ENCODE measurements at regions of chr2 and their contacts with region 1.

Region 1: DNA sequence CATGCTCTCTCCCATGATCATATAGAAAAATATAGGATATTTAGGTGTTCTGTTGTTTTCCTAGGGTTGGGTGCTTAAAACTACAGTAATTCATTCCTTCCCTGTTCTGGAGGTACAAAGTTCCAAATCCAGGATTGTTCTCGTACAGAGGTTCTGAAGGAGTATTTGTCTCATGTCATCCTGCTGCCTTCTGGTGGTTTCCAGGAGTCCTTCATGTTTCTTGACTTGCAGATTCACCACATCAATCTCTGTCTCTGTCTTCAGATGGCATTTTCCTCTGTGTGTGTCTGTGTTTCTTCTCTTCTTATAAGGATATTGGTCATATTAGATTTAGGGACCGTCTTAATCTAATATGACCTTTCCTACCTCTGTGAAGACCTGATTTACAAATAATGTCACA is 397.9 kb downstream of the NYAP2 start:
- DNase-seq: no peak
- ATAC-seq: no peak
- H3K4me3 ChIP-seq: no peak overlapping the region
- H3K27ac ChIP-seq: no peak overlapping the region
- H3K4me1 ChIP-seq: no peaks in the 10 kb centered on the region
- H3K27me3 ChIP-seq: no peaks in the 10 kb centered on the region

Region 2: DNA sequence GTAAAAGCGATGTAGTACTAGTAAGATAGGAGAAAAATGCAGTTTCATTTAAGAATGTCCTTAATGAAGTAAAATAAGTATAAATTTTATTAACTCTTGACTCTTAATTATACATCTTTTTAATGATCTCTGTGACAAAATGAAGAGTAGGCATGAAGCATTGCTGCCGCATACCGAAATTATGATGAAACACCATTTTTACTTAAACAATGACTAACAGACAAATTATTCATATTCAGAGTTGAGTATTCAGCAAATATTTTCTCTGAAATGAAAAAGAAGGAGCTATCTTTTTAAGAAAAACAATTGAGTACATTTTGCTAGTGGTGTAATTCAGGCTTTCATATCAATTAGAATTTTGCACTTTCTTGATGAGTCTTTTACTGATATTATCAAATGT is 604.5 kb before region 1 on chr2:
- intact Hi-C with region 1: no loop called
- DNase-seq: no peak
- ATAC-seq: no peak
- H3K4me3 ChIP-seq: no peak overlapping the region
- H3K27ac ChIP-seq: no peak overlapping the region
- H3K4me1 ChIP-seq: no peaks in the 10 kb centered on the region
- H3K27me3 ChIP-seq: no peaks in the 10 kb centered on the region

Region 3: GRCh38 chr2:225464346-225465025 is 332.9 kb before region 1 on chr2:
- intact Hi-C with region 1: no loop called
- DNase-seq: no peak
- ATAC-seq: no peak
- H3K4me3 ChIP-seq: peak overlapping the region; percentile 7
- H3K27ac ChIP-seq: no peak overlapping the region
- H3K4me1 ChIP-seq: no peaks in the 10 kb centered on the region
- H3K27me3 ChIP-seq: no peaks in the 10 kb centered on the region

Region 4: GRCh38 chr2:225668606-225669266 is 128.7 kb before region 1 on chr2:
- intact Hi-C with region 1: loop called in 1 of 4 experiments (anchors 10 kb)
- DNase-seq: no peak
- ATAC-seq: peak; percentile 50 to 56
- H3K4me3 ChIP-seq: no peak overlapping the region
- H3K27ac ChIP-seq: no peak overlapping the region
- H3K4me1 ChIP-seq: no peaks in the 10 kb centered on the region
- H3K27me3 ChIP-seq: no peaks in the 10 kb centered on the region

Region 5: GRCh38 chr2:225937713-225938112 is 140.3 kb after region 1 on chr2:
- intact Hi-C with region 1: no loop called
- DNase-seq: no peak
- ATAC-seq: no peak
- H3K4me3 ChIP-seq: no peak overlapping the region
- H3K27ac ChIP-seq: no peak overlapping the region
- H3K4me1 ChIP-seq: no peaks in the 10 kb centered on the region
- H3K27me3 ChIP-seq: no peaks in the 10 kb centered on the region

Region 6: GRCh38 chr2:226002438-226002837 is 205.0 kb after region 1 on chr2:
- intact Hi-C with region 1: no loop called
- DNase-seq: peak; percentile 52 to 66 (median 62)
- ATAC-seq: peak; percentile 94 to 97
- H3K4me3 ChIP-seq: no peak overlapping the region
- H3K27ac ChIP-seq: peak overlapping the region; percentile 5
- H3K4me1 ChIP-seq: no peaks in the 10 kb centered on the region
- H3K27me3 ChIP-seq: no peaks in the 10 kb centered on the region

Measured in right cardiac atrium (tissue), 5 donors.